ENCODE measurements at regions of chr3 and their contacts with region 1.

Region 1: DNA sequence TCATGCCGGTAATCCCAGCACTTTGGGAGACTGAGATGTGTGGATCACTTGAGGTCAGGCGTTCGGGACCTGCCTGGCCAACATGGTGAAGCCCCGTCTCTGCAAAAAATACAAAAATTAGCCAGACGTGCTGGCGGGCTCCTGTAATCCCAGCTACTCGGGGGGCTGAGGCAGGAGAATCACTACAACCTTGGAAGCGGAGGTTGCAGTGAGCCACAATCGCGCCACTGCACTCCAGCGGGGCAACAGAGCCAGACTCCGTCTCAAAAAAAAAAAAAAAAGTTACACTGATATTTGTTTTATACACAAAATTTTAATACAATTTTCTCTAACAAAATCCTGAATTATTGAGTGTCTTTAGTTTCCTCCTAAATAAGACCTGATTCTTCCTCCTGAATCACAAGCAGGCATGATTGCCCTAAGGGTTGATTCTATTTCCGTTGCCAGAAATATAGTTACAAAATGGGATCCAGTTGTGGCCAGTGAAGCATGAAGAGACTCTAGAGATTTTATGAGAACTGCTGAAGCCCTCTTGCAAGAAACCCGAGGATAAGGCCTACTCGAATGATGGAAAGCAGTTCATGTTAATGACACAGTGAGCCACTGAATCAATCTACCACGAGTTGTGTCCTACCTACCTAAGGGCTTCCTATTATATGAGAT is 9.6 kb upstream of the SMARCC1 start:
- DNase-seq: no peak
- H3K4me3 ChIP-seq: no peak overlapping the region
- H3K27ac ChIP-seq: no peak overlapping the region
- H3K4me1 ChIP-seq: peaks cover 0 to 3% of the 10 kb centered on the region in 2 donors
- H3K27me3 ChIP-seq: no peaks in the 10 kb centered on the region
- CTCF ChIP-seq: no peak
- POLR2A ChIP-seq: no peak

Region 2: GRCh38 chr3:47522082-47522987 is 269.0 kb before region 1 on chr3:
- intact Hi-C with region 1: loop called (anchors 2 kb)
- DNase-seq: peak; percentile 82 to 83
- H3K4me3 ChIP-seq: no peak overlapping the region
- H3K27ac ChIP-seq: no peak overlapping the region
- H3K4me1 ChIP-seq: peaks cover 15 to 19% of the 10 kb centered on the region in 2 donors
- H3K27me3 ChIP-seq: no peaks in the 10 kb centered on the region
- CTCF ChIP-seq: peak; percentile 67 to 96 (median 93)
- POLR2A ChIP-seq: no peak

Region 3: GRCh38 chr3:47940232-47940631 is 148.9 kb after region 1 on chr3:
- intact Hi-C with region 1: no loop called
- DNase-seq: no peak
- H3K4me3 ChIP-seq: no peak overlapping the region
- H3K27ac ChIP-seq: no peak overlapping the region
- H3K4me1 ChIP-seq: no peaks in the 10 kb centered on the region
- H3K27me3 ChIP-seq: no peaks in the 10 kb centered on the region
- CTCF ChIP-seq: no peak
- POLR2A ChIP-seq: no peak

Measured in thyroid gland (tissue), 4 donors.